Naive thymus-derived CD4-positive, alpha-beta T cell (primary cell): ENCODE measurements at regions of chr6 and their contacts with region 1.

Region 1: GRCh38 chr6:26473758-26474438 is 16.1 kb downstream of the BTN2A1 start:
- DNase-seq: peak; percentile 37 to 94 (median 90)
- ATAC-seq: peak; percentile 96
- H3K4me3 ChIP-seq: peak overlapping the region; percentile 67
- H3K4me3 Mint-ChIP-seq: peak overlapping the region; percentile 88 to 100 (median 97)
- H3K27ac ChIP-seq: peak overlapping the region; percentile 91
- H3K27ac Mint-ChIP-seq: peak overlapping the region; percentile 98 to 100 (median 100)
- H3K4me1 ChIP-seq: peaks cover 33% of the 10 kb centered on the region in 2 donors
- H3K4me1 Mint-ChIP-seq: peaks cover 41 to 72% (median 64%) of the 10 kb centered on the region in 7 donors
- H3K27me3 ChIP-seq: no peaks in the 10 kb centered on the region
- H3K27me3 Mint-ChIP-seq: no peaks in the 10 kb centered on the region

Region 2: DNA sequence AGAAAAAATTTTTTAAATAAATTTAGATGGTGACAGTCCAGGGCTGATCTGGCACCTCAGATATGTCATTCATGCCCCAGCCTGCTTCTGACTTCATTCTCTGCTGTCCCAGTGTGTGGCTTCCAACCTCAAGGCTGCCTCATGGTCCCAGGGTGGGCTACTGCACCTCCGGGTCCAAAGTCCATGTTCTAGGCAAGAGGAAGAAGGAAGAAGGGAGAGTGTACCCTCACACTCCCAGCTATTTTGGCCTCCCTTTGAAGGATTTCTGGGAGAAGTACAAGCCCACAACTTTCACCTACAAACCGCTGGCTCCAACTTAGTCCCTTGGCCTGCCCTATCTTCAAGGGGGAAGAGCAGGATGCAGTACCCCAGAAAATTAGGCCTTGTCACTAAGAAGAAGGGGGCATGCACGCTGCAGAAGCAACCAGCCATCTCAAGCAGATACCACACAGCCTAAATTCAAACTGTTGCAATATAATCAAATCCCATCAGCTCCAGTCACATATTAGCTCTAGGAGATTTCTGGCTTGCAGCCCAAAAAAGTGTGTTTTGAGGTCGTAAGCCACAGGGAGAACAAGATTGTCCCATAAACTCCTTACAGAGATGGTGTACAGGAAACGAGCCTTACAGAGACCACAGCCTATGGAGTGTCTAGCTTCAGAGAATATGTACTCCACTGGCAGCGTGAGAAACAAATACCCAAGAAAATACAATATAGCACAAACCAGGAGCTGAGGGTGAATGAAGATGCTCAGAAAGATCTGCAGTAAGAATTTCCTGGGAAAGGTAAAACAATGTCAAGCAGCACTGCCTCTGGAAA is 109.8 kb before region 1 on chr6:
- CTCF ChIA-PET with region 1: no interaction called
- POLR2A ChIA-PET with region 1: interaction called, 22 read pairs
- intact Hi-C with region 1: loop called (anchors 1 kb)
- DNase-seq: peak in 7 of 9 donors; percentile 22 to 51 (median 45)
- ATAC-seq: peak; percentile 24
- H3K4me3 ChIP-seq: peak overlapping the region; percentile 89
- H3K4me3 Mint-ChIP-seq: no peak overlapping the region
- H3K27ac ChIP-seq: peak overlapping the region; percentile 92
- H3K27ac Mint-ChIP-seq: no peak overlapping the region
- H3K4me1 ChIP-seq: peaks cover 32 to 37% of the 10 kb centered on the region in 2 donors
- H3K4me1 Mint-ChIP-seq: peaks cover 43 to 67% (median 56%) of the 10 kb centered on the region in 7 donors
- H3K27me3 ChIP-seq: no peaks in the 10 kb centered on the region
- H3K27me3 Mint-ChIP-seq: no peaks in the 10 kb centered on the region

Region 3: DNA sequence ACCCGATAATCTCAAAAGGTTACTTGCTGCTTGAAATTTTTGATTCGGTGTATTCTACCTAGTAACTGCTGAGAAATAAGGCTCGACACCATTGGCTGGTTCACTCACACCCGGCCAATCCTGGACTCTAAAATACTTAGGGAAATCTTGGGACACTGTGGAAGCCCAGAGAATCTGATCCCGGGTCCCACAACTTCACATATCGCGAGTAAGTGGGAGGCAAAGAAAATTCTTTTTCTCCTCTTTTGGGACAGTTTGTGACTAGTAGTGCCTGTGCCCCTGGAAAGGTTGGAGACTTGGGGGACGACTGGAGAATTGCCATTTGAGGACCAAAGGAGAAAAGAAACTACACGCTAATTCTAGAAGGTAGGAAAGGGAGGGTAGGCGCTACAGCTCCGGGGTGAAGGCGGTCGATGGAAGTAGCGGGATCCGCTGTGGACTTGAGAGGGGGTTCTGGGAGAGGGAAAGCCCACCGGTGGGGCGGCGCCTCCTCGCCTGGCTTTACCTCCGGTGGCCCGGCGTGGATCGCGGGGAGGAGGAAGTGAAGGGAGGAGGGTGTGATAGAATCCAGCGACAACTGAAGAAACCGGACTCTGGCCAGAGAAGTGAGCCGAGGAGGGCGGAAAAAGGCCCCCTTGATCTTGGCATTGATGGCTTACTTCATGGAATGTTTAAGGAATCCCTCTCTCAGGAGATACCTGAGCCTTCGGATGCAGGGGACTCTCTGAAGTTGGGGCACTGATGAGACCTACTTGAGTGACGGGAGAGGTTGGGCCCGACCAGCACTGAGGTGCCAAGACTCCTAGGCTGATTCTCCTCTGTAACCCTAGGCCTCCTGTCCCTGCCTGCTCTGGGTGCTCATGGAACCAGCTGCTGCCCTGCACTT is 52.4 kb before region 1 on chr6:
- CTCF ChIA-PET with region 1: no interaction called
- POLR2A ChIA-PET with region 1: interaction called, 7 read pairs
- intact Hi-C with region 1: loop called in 1 of 2 experiments (anchors 1 kb)
- DNase-seq: peak; percentile 11 to 71 (median 62)
- ATAC-seq: peak; percentile 96
- H3K4me3 ChIP-seq: peak overlapping the region; percentile 79
- H3K4me3 Mint-ChIP-seq: no peak overlapping the region
- H3K27ac ChIP-seq: peak overlapping the region; percentile 71
- H3K27ac Mint-ChIP-seq: peak overlapping the region in 2 of 9 donors; percentile 43 to 79
- H3K4me1 ChIP-seq: peaks cover 5 to 9% of the 10 kb centered on the region in 2 donors
- H3K4me1 Mint-ChIP-seq: peaks cover 0 to 16% (median 3%) of the 10 kb centered on the region in 7 donors
- H3K27me3 ChIP-seq: no peaks in the 10 kb centered on the region
- H3K27me3 Mint-ChIP-seq: no peaks in the 10 kb centered on the region

Region 4: GRCh38 chr6:26485112-26485780 is 11.3 kb after region 1 on chr6:
- CTCF ChIA-PET with region 1: interaction called, 4 read pairs
- POLR2A ChIA-PET with region 1: interaction called, 11 read pairs
- intact Hi-C with region 1: no loop called
- DNase-seq: no peak
- ATAC-seq: no peak
- H3K4me3 ChIP-seq: no peak overlapping the region
- H3K4me3 Mint-ChIP-seq: no peak overlapping the region
- H3K27ac ChIP-seq: no peak overlapping the region
- H3K27ac Mint-ChIP-seq: peak overlapping the region in 1 of 9 donors; percentile 18
- H3K4me1 ChIP-seq: no peaks in the 10 kb centered on the region
- H3K4me1 Mint-ChIP-seq: peaks cover 0 to 7% (median 0%) of the 10 kb centered on the region in 7 donors
- H3K27me3 ChIP-seq: no peaks in the 10 kb centered on the region
- H3K27me3 Mint-ChIP-seq: peaks cover 0 to 8% (median 0%) of the 10 kb centered on the region in 5 donors

Region 5: DNA sequence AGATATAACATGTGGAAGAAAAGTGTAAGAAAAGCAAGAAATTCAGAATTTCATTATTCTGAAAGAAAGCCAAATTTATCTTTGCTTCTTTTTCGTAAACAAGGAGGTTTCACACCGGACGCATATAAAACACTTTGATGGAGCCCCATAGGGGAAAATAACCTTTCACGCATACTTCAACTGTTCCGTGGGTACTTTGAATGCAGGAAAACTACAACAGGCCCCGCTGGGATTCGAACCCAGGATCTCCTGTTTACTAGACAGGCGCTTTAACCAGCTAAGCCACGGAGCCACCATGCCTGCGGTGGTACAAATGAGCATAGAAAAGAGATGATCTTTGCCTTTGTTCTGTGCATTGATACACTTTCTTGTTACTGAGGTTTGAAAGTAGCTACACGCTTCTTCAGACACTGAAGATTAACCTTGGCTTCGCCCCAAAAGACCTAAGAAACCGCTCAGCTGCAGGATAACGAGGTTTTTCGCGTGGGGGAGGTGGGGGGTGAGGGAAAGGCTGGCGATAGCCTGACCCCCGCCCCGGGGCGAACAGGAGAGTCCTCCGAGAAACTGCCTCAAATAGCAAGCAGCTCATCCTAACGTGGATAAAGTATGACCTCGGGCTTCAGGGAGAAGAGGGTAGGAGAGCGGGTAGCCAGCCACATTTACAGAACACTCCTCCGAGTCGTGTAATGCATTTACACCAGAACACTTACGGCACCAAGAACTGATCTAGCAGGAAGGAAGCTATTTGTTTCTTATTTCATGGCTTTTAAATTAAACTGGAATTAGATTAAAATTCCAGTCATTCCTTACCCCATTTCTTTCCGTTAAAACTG is 59.0 kb after region 1 on chr6:
- CTCF ChIA-PET with region 1: interaction called, 3 read pairs
- POLR2A ChIA-PET with region 1: interaction called, 51 read pairs
- intact Hi-C with region 1: loop called (anchors 1 kb)
- DNase-seq: peak; percentile 67 to 94 (median 93)
- ATAC-seq: peak; percentile 57
- H3K4me3 ChIP-seq: peak overlapping the region; percentile 93
- H3K4me3 Mint-ChIP-seq: peak overlapping the region; percentile 83 to 99 (median 96)
- H3K27ac ChIP-seq: peak overlapping the region; percentile 72
- H3K27ac Mint-ChIP-seq: peak overlapping the region; percentile 88 to 98 (median 97)
- H3K4me1 ChIP-seq: peaks cover 14 to 23% of the 10 kb centered on the region in 2 donors
- H3K4me1 Mint-ChIP-seq: peaks cover 17 to 70% (median 45%) of the 10 kb centered on the region in 7 donors
- H3K27me3 ChIP-seq: no peaks in the 10 kb centered on the region
- H3K27me3 Mint-ChIP-seq: peaks cover 0 to 7% (median 0%) of the 10 kb centered on the region in 5 donors

Region 6: DNA sequence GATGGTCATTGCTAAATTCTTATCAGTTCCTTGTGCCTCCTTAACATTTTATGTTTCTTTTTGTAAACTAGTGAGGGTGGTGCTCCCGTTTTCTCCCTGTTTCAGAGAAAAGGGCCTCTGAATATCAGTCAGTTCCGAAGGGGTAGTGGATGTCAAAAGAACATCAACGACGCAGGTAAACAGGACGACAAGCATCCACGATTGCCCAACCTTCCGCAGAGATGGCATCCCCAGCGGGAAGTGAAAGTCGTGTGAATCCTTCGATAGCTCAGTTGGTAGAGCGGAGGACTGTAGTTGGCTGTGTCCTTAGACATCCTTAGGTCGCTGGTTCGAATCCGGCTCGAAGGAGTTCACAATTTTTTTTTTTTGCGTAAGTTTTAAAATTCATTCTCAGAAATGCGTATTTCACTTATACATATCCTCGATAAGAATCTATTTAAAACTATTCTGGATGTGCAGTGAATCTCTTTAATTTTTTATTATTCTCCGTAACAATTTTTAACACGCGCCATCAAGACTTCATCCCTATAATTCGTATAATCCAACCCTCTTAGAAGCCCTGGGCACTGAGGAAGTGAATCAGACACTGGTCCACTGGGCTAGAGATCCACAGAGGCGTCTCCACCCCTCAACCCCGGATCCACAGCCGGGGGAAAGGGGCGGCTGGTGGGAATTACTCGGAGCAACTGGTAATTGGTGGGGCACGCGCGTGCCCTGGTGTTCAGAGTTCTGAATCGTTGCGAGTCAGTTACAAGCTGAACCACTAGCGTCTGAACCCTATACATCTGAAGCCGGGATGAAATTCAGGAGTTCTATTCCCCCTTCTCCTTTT is 94.9 kb after region 1 on chr6:
- CTCF ChIA-PET with region 1: no interaction called
- POLR2A ChIA-PET with region 1: interaction called, 12 read pairs
- intact Hi-C with region 1: loop called in 1 of 2 experiments (anchors 1 kb)
- DNase-seq: peak; percentile 96 to 99 (median 98)
- ATAC-seq: peak; percentile 84
- H3K4me3 ChIP-seq: peak overlapping the region; percentile 90
- H3K4me3 Mint-ChIP-seq: peak overlapping the region; percentile 90 to 100 (median 95)
- H3K27ac ChIP-seq: peak overlapping the region; percentile 74
- H3K27ac Mint-ChIP-seq: peak overlapping the region; percentile 96 to 100 (median 99)
- H3K4me1 ChIP-seq: peaks cover 0 to 3% of the 10 kb centered on the region in 2 donors
- H3K4me1 Mint-ChIP-seq: peaks cover 11 to 42% (median 26%) of the 10 kb centered on the region in 7 donors
- H3K27me3 ChIP-seq: no peaks in the 10 kb centered on the region
- H3K27me3 Mint-ChIP-seq: peaks cover 0 to 12% (median 0%) of the 10 kb centered on the region in 5 donors

Region 7: GRCh38 chr6:27280064-27280539 is 806.2 kb after region 1 on chr6:
- CTCF ChIA-PET with region 1: no interaction called
- POLR2A ChIA-PET with region 1: no interaction called
- intact Hi-C with region 1: no loop called
- DNase-seq: peak in 1 of 9 donors; percentile 13
- ATAC-seq: no peak
- H3K4me3 ChIP-seq: no peak overlapping the region
- H3K4me3 Mint-ChIP-seq: peak overlapping the region in 5 of 10 donors; percentile 28 to 51 (median 44)
- H3K27ac ChIP-seq: no peak overlapping the region
- H3K27ac Mint-ChIP-seq: peak overlapping the region in 5 of 9 donors; percentile 59 to 83 (median 77)
- H3K4me1 ChIP-seq: no peaks in the 10 kb centered on the region
- H3K4me1 Mint-ChIP-seq: peaks cover 0 to 19% (median 4%) of the 10 kb centered on the region in 7 donors
- H3K27me3 ChIP-seq: peaks cover 32 to 52% of the 10 kb centered on the region in 2 donors
- H3K27me3 Mint-ChIP-seq: peaks cover 74 to 88% (median 86%) of the 10 kb centered on the region in 5 donors